Endothelial cell of umbilical vein (primary cell): ENCODE measurements at regions of chr12 and their contacts with region 1.

Region 1: DNA sequence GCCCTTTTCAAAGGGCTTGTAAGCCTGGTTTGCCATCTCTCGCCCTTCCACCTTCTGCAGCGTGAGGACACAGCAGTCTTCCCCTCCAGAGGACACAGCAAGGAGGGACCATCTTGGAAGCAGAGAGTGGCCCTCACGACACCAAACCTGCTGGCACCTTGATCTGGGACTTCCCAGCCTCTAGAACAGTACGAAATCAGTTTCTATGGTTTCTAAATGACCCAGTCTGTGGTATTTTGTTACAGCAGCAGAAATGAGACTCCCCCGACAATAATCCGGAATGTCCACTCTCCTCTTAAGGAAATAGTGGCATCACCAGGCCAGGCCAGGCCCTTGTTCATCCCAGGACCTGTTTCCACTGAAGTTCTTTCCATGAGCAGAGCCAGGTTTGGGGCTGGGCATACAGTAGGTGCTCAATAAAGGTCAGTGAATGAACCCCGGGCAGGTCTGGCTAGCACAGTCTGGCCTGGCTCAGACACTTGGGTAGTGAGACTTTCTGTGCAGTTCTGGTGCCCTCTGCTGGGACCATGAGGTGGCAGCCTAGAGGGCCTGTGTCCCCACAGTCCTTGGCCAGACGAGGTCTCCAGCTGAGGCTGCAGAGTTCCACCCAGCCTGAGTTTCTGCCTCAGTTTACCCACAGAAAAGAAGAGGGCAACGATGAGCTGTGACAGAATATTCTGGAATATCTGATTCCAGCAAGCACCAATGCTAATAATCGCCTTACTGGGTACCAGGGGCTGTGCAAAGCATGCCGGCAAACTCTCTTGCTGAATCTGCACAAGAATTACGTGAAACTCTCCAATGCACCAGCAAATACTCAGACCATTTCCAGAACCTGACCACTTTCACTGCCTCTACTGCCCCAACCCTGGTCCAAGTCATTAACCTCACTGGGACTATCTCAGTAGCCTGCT is 14.0 kb downstream of the ABCB9 start:
- DNase-seq: peak; percentile 72
- H3K4me3 ChIP-seq: no peak overlapping the region
- H3K27ac ChIP-seq: peak overlapping the region; percentile 51
- H3K4me1 ChIP-seq: peaks cover 18% of the 10 kb centered on the region
- H3K27me3 ChIP-seq: no peaks in the 10 kb centered on the region
- CTCF ChIP-seq: peak; percentile 91 to 92
- POLR2A ChIP-seq: no peak

Region 2: DNA sequence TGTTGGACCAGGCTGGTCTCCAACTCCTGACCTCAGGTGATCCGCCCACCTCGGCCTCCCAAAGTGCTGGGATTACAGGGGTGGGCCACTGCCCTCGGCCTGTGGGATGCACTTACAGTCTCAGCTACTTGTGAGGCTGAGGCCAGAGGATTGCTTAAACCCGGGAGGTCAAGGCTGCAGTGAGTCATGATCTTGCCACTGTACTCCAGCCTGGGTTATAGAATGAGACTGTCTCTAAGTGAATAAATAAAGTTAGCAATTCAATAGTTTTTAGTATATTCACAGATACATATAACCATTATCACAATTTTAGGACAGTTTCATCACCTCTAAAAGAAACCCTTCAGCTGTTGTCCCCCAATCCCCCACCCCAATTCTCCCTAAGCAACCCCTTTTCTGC is 310.2 kb before region 1 on chr12:
- CTCF ChIA-PET with region 1: interaction called, 4 read pairs
- POLR2A ChIA-PET with region 1: no interaction called
- dilution Hi-C with region 1: no loop called
- intact Hi-C with region 1: loop called (anchors 2 kb)
- DNase-seq: no peak
- H3K4me3 ChIP-seq: no peak overlapping the region
- H3K27ac ChIP-seq: no peak overlapping the region
- H3K4me1 ChIP-seq: no peaks in the 10 kb centered on the region
- H3K27me3 ChIP-seq: no peaks in the 10 kb centered on the region
- CTCF ChIP-seq: no peak
- POLR2A ChIP-seq: no peak

Region 3: GRCh38 chr12:122860346-122861090 is 91.7 kb before region 1 on chr12:
- CTCF ChIA-PET with region 1: interaction called, 200 read pairs
- POLR2A ChIA-PET with region 1: no interaction called
- dilution Hi-C with region 1: no loop called
- intact Hi-C with region 1: loop called (anchors 1 kb)
- DNase-seq: peak; percentile 63
- H3K4me3 ChIP-seq: no peak overlapping the region
- H3K27ac ChIP-seq: no peak overlapping the region
- H3K4me1 ChIP-seq: no peaks in the 10 kb centered on the region
- H3K27me3 ChIP-seq: no peaks in the 10 kb centered on the region
- CTCF ChIP-seq: peak; percentile 80 to 88
- POLR2A ChIP-seq: no peak

Region 4: GRCh38 chr12:122865268-122866231 is 86.7 kb before region 1 on chr12:
- CTCF ChIA-PET with region 1: interaction called, 200 read pairs
- POLR2A ChIA-PET with region 1: no interaction called
- dilution Hi-C with region 1: no loop called
- intact Hi-C with region 1: loop called (anchors 1 kb)
- DNase-seq: peak; percentile 40
- H3K4me3 ChIP-seq: no peak overlapping the region
- H3K27ac ChIP-seq: no peak overlapping the region
- H3K4me1 ChIP-seq: peaks cover 4% of the 10 kb centered on the region
- H3K27me3 ChIP-seq: no peaks in the 10 kb centered on the region
- CTCF ChIP-seq: peak; percentile 54 to 73
- POLR2A ChIP-seq: no peak

Region 5: GRCh38 chr12:122871851-122872780 is 80.1 kb before region 1 on chr12:
- CTCF ChIA-PET with region 1: interaction called, 23 read pairs
- POLR2A ChIA-PET with region 1: no interaction called
- dilution Hi-C with region 1: no loop called
- intact Hi-C with region 1: loop called (anchors 1 kb)
- DNase-seq: peak; percentile 84
- H3K4me3 ChIP-seq: peak overlapping the region in 2 of 3 experiments; percentile 25 to 60
- H3K27ac ChIP-seq: peak overlapping the region; percentile 92
- H3K4me1 ChIP-seq: peaks cover 32% of the 10 kb centered on the region
- H3K27me3 ChIP-seq: no peaks in the 10 kb centered on the region
- CTCF ChIP-seq: no peak
- POLR2A ChIP-seq: no peak

Region 6: DNA sequence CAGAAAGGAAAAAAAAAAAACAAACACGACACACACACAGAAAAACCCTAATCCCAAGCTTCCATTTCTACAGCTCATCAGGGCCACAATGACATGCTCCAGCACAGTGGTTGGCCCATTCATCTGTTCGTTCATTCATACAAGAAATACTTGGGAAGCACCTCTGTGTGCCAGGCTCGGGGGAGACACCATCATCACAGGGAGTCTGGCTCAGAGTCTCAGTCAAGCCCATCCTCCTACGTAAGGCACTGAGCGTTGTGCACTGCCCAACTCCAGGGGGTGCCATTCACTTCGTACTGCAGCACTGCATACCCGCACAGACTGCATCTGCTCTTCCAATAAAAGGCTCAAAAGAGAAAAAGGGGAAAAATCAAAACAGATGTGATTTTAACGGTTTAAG is 71.6 kb before region 1 on chr12:
- CTCF ChIA-PET with region 1: interaction called, 13 read pairs
- POLR2A ChIA-PET with region 1: no interaction called
- dilution Hi-C with region 1: no loop called
- intact Hi-C with region 1: no loop called
- DNase-seq: no peak
- H3K4me3 ChIP-seq: no peak overlapping the region
- H3K27ac ChIP-seq: no peak overlapping the region
- H3K4me1 ChIP-seq: peaks cover 19% of the 10 kb centered on the region
- H3K27me3 ChIP-seq: no peaks in the 10 kb centered on the region
- CTCF ChIP-seq: peak; percentile 22 to 25
- POLR2A ChIP-seq: no peak

Region 7: GRCh38 chr12:122909442-122910288 is 42.6 kb before region 1 on chr12:
- CTCF ChIA-PET with region 1: no interaction called
- POLR2A ChIA-PET with region 1: no interaction called
- dilution Hi-C with region 1: no loop called
- intact Hi-C with region 1: no loop called
- DNase-seq: no peak
- H3K4me3 ChIP-seq: no peak overlapping the region
- H3K27ac ChIP-seq: no peak overlapping the region
- H3K4me1 ChIP-seq: no peaks in the 10 kb centered on the region
- H3K27me3 ChIP-seq: peaks cover 0 to 1% of the 10 kb centered on the region in 2 experiments
- CTCF ChIP-seq: no peak
- POLR2A ChIP-seq: no peak

Region 8: GRCh38 chr12:122937622-122938091 is 14.6 kb before region 1 on chr12:
- CTCF ChIA-PET with region 1: no interaction called
- POLR2A ChIA-PET with region 1: no interaction called
- dilution Hi-C with region 1: no loop called
- intact Hi-C with region 1: no loop called
- DNase-seq: no peak
- H3K4me3 ChIP-seq: no peak overlapping the region
- H3K27ac ChIP-seq: no peak overlapping the region
- H3K4me1 ChIP-seq: peaks cover 2% of the 10 kb centered on the region
- H3K27me3 ChIP-seq: no peaks in the 10 kb centered on the region
- CTCF ChIP-seq: no peak
- POLR2A ChIP-seq: no peak

Region 9: GRCh38 chr12:122965851-122966722 is 13.9 kb after region 1 on chr12 and contains the start of gene ABCB9:
- CTCF ChIA-PET with region 1: interaction called, 13 read pairs
- POLR2A ChIA-PET with region 1: interaction called, 3 read pairs
- dilution Hi-C with region 1: no loop called
- intact Hi-C with region 1: no loop called
- DNase-seq: peak; percentile 92
- H3K4me3 ChIP-seq: peak within 1 kb of the TSS; percentile 68 to 85 (median 77)
- H3K27ac ChIP-seq: no peak within 1 kb of the TSS
- H3K4me1 ChIP-seq: peaks cover 6% of the 10 kb centered on the region
- H3K27me3 ChIP-seq: no peaks in the 10 kb centered on the region
- CTCF ChIP-seq: no peak
- POLR2A ChIP-seq: peak; percentile 54
- total RNA-seq, gene ABCB9: 12.0 and 16.9 TPM in 2 replicates

Region 10: DNA sequence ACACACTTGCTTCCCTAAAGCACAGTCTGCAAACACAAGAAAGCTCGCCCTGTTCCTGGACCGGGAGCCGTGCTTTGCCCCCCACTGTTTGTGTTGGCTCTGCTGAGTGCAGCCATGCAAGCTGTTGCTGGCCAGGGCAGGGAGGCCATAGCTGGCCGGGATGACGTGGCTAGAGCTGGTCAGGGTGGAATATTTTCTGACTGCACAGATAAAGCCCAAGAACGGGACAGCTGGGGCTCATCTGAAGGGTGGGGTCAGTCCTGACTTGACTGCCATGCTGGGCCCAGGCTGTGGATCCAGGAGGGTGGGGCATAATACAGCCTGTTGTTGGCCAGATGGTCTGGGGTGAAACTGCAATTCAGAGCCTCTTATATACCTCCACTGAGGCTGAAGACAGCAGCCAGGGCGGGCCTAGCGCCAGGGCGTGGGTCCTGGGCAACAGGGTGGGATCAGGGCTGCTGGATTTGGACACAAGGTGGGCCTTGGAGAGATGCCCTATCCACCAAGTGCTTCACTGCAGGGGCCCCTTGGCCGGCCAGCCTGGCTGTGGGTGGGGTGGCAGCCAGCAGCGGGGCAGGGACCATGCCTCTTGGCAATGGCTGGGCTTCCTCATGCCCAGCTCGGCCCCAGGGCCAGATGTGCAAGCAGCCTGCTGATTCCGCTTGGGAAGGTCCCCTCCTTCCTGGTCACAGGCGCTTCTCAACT is 446.5 kb after region 1 on chr12:
- CTCF ChIA-PET with region 1: no interaction called
- POLR2A ChIA-PET with region 1: no interaction called
- dilution Hi-C with region 1: no loop called
- intact Hi-C with region 1: no loop called
- DNase-seq: peak; percentile 87
- H3K4me3 ChIP-seq: no peak overlapping the region
- H3K27ac ChIP-seq: peak overlapping the region; percentile 14
- H3K4me1 ChIP-seq: peaks cover 11% of the 10 kb centered on the region
- H3K27me3 ChIP-seq: no peaks in the 10 kb centered on the region
- CTCF ChIP-seq: no peak
- POLR2A ChIP-seq: peak; percentile 17